IMR-90 (cell line): ENCODE measurements at regions of chr1 and their contacts with region 1.

Region 1: DNA sequence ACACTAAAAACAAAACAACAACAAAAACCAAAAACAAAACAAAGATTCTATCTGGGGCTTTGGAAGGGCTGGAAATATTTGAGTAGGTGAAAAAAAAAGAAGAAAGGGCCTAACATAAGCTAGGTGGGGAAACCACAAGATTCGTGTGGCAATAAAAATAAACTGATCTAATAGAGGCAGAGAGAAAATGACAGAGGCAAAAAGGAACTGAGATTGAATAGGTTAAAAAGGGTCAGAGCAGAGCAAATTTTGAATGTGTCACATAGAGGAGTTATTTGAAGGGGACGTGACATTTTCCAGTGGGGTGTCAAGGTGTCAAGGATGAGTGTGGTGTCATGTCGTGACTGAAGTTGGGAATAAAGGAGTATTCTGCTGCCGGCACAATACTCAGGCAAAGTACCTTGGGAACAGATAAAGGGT is 65.2 kb upstream of the RALGPS2 start:
- DNase-seq: no peak
- ATAC-seq: no peak
- H3K4me3 ChIP-seq: no peak overlapping the region
- H3K27ac ChIP-seq: no peak overlapping the region
- H3K4me1 ChIP-seq: 0 out of 2 replicates have a peak, but pooled peaks cover 2% of the 10 kb centered on the region
- H3K27me3 ChIP-seq: no peaks in the 10 kb centered on the region
- CTCF ChIP-seq: no peak
- POLR2A ChIP-seq: no peak
- RAD21 ChIP-seq: no peak

Region 2: DNA sequence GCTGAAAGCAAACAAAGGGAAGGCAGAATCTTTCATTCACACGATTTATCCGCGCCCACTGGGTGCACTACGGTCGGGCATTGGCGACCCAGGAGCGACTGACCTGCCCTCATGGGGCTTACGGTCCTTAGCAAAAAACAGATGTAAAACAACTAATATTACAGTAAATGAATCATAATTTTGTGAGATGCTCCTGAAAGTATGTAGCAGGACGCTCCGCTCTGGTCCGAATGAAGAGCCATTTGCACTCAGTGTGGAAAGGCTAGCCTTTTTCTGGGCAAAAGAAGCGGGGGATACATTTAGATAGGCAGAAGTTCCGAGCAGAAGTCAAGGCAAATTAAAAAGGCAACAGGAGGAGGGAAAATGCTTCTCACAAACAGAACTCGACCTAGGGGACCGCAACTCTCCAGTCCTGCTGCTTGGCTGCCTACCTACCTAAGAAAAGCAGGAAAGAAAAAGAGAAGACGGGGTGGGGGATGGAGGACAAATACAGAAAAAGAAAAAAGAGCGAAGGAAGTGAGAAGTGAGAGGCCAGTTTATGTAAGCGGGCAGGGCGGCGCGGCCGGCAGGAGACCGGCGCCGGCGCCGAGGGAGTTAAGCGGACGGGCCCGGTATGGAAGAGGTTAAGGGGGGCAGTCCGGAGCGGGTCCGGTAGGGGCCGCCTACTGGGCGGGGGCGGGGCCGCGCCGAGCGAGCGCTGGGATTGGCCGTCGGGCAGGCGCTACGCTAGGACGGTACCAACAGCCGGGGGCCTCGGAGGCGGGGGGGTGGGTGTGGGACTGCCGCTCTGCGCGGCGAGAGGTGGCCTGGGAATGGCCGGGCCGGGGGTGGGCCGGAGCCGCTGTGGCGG is 365.6 kb after region 1 on chr1 and contains the start of gene FAM20B:
- CTCF ChIA-PET with region 1: no interaction called
- POLR2A ChIA-PET with region 1: interaction called, 19 read pairs
- dilution Hi-C with region 1: no loop called
- in situ Hi-C with region 1: no loop called
- intact Hi-C with region 1: no loop called
- DNase-seq: peak; percentile 88
- ATAC-seq: peak; percentile 95
- H3K4me3 ChIP-seq: peak within 1 kb of the TSS; percentile 90
- H3K27ac ChIP-seq: peak within 1 kb of the TSS; percentile 33
- H3K4me1 ChIP-seq: no peaks in the 10 kb centered on the region
- H3K27me3 ChIP-seq: no peaks in the 10 kb centered on the region
- CTCF ChIP-seq: no peak
- POLR2A ChIP-seq: no peak
- RAD21 ChIP-seq: no peak
- total RNA-seq, gene FAM20B: 36.7 and 38.4 TPM in 2 replicates